ENCODE measurements at regions of chr4 and their contacts with region 1.

Region 1: GRCh38 chr4:54793856-54794422 is 136.2 kb downstream of the KIT start:
- DNase-seq: no peak
- H3K4me3 ChIP-seq: no peak overlapping the region
- H3K27ac ChIP-seq: no peak overlapping the region
- H3K4me1 ChIP-seq: no peaks in the 10 kb centered on the region
- H3K27me3 ChIP-seq: no peaks in the 10 kb centered on the region
- CTCF ChIP-seq: no peak
- POLR2A ChIP-seq: no peak

Region 2: GRCh38 chr4:53354012-53354722 is 1439.8 kb before region 1 on chr4:
- intact Hi-C with region 1: loop called (anchors 5 kb)
- DNase-seq: no peak
- H3K4me3 ChIP-seq: no peak overlapping the region
- H3K27ac ChIP-seq: no peak overlapping the region
- H3K4me1 ChIP-seq: no peaks in the 10 kb centered on the region
- H3K27me3 ChIP-seq: no peaks in the 10 kb centered on the region
- CTCF ChIP-seq: no peak
- POLR2A ChIP-seq: no peak

Region 3: GRCh38 chr4:54709401-54709800 is 84.5 kb before region 1 on chr4:
- intact Hi-C with region 1: no loop called
- DNase-seq: no peak
- H3K4me3 ChIP-seq: no peak overlapping the region
- H3K27ac ChIP-seq: no peak overlapping the region
- H3K4me1 ChIP-seq: no peaks in the 10 kb centered on the region
- H3K27me3 ChIP-seq: no peaks in the 10 kb centered on the region
- CTCF ChIP-seq: no peak
- POLR2A ChIP-seq: no peak

Measured in vagina (tissue), 2 donors.